Activated B cell treated with CpG ODN at 0.5 μM for 24 hours (primary cell): ENCODE measurements at regions of chr6 and their contacts with region 1.

Region 1: GRCh38 chr6:26196846-26197648 is 109.8 kb downstream of the HFE start:
- DNase-seq: peak; percentile 63
- ATAC-seq: peak; percentile 53
- H3K4me3 Mint-ChIP-seq: peak overlapping the region; percentile 93
- H3K27ac Mint-ChIP-seq: peak overlapping the region; percentile 96
- H3K4me1 Mint-ChIP-seq: peaks cover 52% of the 10 kb centered on the region
- H3K27me3 Mint-ChIP-seq: no peaks in the 10 kb centered on the region
- CTCF ChIP-seq: no peak

Region 2: DNA sequence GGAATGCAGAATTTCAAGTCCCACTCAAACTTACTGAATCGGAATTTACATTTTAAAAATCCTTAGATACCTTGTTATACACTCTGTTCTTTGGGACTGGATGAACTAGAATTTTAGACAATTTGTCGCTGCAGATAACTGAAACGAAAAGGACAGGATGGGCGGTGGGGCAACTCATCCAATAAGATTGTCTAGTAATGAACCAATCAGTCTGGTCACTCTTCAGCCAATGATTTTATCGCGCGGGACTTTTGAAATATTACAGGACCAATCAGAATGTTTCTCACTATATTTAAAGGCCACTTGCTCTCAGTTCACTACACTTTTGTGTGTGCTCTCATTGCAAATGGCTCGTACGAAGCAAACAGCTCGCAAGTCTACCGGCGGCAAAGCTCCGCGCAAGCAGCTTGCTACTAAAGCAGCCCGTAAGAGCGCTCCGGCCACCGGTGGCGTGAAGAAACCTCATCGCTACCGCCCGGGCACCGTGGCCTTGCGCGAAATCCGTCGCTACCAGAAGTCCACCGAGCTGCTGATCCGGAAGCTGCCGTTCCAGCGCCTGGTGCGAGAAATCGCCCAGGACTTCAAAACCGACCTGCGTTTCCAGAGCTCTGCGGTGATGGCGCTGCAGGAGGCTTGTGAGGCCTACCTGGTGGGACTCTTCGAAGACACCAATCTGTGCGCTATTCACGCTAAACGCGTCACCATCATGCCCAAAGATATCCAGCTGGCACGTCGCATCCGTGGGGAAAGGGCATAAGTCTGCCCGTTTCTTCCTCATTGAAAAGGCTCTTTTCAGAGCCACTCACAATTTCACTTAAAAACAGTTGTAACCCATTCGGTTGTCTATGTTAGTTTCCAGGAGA is 151.8 kb before region 1 on chr6:
- CTCF ChIA-PET with region 1: no interaction called
- POLR2A ChIA-PET with region 1: interaction called, 108 read pairs
- intact Hi-C with region 1: no loop called
- DNase-seq: peak; percentile 51
- ATAC-seq: peak; percentile 58
- H3K4me3 Mint-ChIP-seq: peak overlapping the region; percentile 91
- H3K27ac Mint-ChIP-seq: peak overlapping the region; percentile 99
- H3K4me1 Mint-ChIP-seq: peaks cover 24% of the 10 kb centered on the region
- H3K27me3 Mint-ChIP-seq: no peaks in the 10 kb centered on the region
- CTCF ChIP-seq: no peak

Region 3: DNA sequence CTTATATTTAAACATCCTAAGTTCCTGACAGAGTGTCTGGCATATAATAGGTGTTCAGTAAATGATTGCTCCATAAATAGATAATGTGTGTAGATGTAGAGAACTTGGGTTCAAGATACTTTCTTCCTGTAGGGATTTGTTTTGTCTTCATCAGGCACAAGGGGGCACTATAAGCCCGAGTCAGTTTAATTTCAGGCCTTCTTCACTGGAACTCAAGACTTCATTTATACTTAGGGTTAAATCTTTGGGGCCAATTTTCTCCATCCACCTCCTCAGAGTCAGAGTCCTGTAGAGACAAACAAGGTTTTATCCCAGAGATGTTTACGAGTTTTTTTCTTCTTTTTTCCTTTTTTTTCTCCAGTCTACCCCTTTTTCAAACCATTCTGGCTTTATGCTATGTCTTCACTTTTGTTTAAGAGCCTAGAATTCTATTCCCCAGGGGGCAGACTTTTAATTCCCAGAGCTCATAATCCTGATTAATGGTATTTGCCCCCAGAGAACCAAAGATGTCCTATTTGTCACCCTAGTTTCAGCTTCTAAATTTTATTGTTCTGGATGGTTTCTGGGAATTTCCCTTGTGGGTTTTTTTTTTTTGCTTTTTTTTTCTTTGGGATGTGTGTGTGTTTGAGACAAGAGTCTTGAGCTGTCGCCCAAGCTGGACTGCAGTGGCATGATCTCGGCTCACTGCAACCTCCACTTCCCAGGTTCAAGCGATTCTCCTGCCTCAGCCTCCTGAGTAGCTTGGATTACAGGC is 21.4 kb before region 1 on chr6:
- CTCF ChIA-PET with region 1: interaction called, 12 read pairs
- POLR2A ChIA-PET with region 1: interaction called, 132 read pairs
- intact Hi-C with region 1: loop called (anchors 1 kb)
- DNase-seq: no peak
- ATAC-seq: no peak
- H3K4me3 Mint-ChIP-seq: no peak overlapping the region
- H3K27ac Mint-ChIP-seq: peak overlapping the region; percentile 65
- H3K4me1 Mint-ChIP-seq: peaks cover 38% of the 10 kb centered on the region
- H3K27me3 Mint-ChIP-seq: no peaks in the 10 kb centered on the region
- CTCF ChIP-seq: no peak

Region 4: DNA sequence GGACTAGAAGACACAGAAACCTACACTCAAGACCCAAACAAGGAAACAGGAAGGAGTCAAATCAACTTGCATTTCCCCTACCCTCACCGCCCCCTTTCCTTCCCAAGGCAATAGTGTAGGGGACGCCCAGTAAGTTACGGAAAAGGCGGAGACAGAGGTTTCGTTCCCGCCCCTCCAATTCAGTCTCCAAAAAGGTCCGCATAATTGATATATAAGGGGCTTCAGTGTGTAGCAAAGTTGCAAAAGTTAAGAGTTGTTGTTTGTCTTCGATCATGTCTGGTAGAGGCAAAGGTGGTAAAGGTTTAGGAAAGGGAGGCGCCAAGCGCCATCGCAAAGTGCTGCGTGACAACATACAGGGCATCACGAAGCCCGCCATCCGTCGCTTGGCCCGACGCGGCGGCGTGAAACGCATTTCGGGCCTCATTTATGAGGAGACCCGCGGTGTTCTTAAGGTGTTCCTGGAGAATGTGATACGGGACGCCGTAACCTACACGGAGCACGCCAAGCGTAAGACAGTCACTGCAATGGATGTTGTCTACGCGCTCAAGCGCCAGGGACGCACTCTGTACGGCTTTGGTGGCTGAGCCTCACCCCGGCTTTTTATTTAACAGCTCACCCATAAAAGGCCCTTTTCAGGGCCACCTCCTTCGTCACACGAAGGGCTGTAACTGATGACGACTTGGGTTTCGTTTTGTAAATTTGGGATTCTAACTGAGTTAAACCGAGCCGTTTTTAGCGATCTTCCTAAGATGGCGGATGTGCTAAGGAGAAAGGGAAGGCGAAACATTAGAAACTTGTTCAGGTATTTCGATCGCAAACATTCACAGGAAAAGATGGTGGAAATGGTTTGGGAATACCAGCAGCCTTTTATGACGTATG is 43.3 kb after region 1 on chr6:
- CTCF ChIA-PET with region 1: interaction called, 3 read pairs
- POLR2A ChIA-PET with region 1: interaction called, 340 read pairs
- intact Hi-C with region 1: loop called (anchors 1 kb)
- DNase-seq: peak; percentile 61
- ATAC-seq: peak; percentile 79
- H3K4me3 Mint-ChIP-seq: peak overlapping the region; percentile 82
- H3K27ac Mint-ChIP-seq: peak overlapping the region; percentile 92
- H3K4me1 Mint-ChIP-seq: peaks cover 26% of the 10 kb centered on the region
- H3K27me3 Mint-ChIP-seq: no peaks in the 10 kb centered on the region
- CTCF ChIP-seq: no peak

Region 5: DNA sequence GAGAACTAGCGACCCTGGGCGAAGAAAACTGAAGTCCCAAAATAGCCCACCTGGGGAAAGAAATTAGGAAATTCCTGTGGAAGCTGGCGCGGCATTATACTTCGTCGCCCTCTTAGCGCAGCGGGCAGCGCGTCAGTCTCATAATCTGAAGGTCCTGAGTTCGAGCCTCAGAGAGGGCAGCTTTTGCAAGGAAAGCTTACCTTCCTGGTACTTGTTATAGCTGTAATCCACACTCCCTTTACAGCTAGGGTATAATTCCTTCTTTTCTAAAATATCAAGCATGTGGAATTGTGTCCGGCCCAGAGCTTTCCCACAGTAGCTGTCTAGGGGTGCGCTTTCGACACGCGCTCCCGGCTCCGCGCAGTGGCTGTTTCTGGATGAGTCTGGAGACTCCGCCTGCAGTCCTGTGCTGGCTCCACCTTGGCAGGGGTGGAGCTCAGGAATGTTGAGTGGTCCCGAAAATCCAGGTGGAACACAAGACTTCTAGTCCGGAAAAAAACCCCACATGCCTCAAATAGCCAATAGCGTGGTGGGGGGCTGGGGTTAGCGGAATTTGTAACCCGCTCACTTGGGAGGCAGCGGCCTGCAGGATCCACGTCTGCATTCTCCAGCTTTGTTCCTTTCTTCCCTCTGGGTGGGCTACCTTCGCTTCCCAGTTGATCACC is 546.2 kb after region 1 on chr6:
- CTCF ChIA-PET with region 1: no interaction called
- POLR2A ChIA-PET with region 1: no interaction called
- intact Hi-C with region 1: no loop called
- DNase-seq: no peak
- ATAC-seq: no peak
- H3K4me3 Mint-ChIP-seq: no peak overlapping the region
- H3K27ac Mint-ChIP-seq: no peak overlapping the region
- H3K4me1 Mint-ChIP-seq: no peaks in the 10 kb centered on the region
- H3K27me3 Mint-ChIP-seq: peaks cover 39% of the 10 kb centered on the region
- CTCF ChIP-seq: no peak

Region 6: DNA sequence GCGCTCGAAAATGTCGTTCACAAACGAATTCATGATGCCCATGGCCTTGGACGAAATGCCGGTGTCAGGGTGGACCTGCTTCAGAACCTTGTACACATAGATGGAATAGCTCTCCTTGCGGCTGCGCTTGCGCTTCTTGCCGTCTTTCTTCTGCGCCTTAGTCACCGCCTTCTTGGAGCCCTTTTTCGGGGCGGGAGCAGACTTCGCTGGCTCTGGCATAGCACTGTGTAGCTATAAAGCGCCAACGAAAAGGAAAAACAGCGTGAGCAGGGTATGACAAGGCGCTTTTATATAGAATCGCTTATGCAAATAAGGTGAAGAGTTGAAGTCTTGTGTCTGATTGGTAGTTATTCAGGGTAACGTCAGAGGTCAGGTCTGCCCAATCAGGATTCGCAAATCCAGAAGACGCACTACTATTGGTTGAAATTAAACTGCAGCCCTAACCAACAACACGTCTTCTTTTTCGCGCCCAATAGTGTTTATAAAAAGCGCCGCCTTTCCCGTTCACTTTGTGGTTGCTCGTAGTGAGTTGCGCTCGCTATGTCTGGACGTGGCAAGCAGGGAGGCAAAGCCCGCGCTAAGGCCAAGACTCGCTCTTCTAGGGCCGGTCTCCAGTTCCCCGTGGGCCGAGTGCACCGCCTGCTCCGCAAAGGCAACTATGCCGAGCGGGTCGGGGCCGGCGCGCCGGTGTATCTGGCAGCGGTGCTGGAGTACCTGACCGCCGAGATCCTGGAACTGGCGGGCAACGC is 935.7 kb after region 1 on chr6:
- CTCF ChIA-PET with region 1: no interaction called
- POLR2A ChIA-PET with region 1: interaction called, 37 read pairs
- intact Hi-C with region 1: loop called (anchors 2 kb)
- DNase-seq: peak; percentile 77
- ATAC-seq: peak; percentile 84
- H3K4me3 Mint-ChIP-seq: no peak overlapping the region
- H3K27ac Mint-ChIP-seq: no peak overlapping the region
- H3K4me1 Mint-ChIP-seq: peaks cover 14% of the 10 kb centered on the region
- H3K27me3 Mint-ChIP-seq: no peaks in the 10 kb centered on the region
- CTCF ChIP-seq: no peak

Region 7: DNA sequence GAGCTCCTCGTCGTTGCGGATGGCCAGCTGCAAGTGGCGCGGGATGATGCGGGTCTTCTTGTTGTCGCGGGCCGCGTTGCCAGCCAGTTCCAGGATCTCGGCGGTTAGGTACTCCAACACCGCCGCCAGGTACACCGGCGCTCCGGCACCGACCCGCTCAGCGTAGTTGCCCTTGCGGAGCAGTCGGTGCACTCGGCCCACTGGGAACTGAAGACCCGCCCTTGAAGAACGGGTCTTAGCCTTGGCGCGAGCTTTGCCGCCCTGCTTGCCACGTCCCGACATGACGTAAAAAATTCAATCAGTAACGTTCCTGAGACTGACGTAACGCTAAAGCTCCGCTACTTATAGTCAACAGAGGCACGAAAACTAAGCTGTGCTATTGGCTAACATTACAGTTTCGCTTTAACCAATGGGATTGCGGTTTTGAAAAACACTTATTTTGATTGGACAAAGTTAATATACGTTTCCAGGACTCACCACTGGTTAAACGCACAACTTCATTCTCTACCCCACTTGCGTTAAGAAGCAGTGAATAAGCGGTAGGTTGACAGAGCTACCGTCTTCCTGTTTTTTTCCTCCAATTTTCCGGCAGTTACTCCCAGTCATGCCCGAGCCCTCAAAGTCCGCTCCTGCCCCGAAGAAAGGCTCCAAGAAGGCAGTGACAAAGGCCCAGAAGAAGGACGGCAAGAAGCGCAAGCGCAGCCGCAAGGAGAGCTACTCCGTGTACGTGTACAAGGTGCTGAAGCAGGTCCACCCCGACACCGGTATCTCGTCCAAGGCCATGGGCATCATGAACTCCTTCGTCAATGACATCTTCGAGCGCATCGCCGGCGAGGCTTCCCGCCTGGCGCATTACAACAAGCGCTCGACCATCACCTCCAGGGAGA is 1641.3 kb after region 1 on chr6:
- CTCF ChIA-PET with region 1: no interaction called
- POLR2A ChIA-PET with region 1: interaction called, 68 read pairs
- intact Hi-C with region 1: loop called (anchors 2 kb)
- DNase-seq: peak; percentile 73
- ATAC-seq: peak; percentile 76
- H3K4me3 Mint-ChIP-seq: no peak overlapping the region
- H3K27ac Mint-ChIP-seq: no peak overlapping the region
- H3K4me1 Mint-ChIP-seq: peaks cover 18% of the 10 kb centered on the region
- H3K27me3 Mint-ChIP-seq: no peaks in the 10 kb centered on the region
- CTCF ChIP-seq: no peak

Region 8: GRCh38 chr6:28136585-28137504 is 1939.8 kb after region 1 on chr6:
- CTCF ChIA-PET with region 1: no interaction called
- POLR2A ChIA-PET with region 1: no interaction called
- intact Hi-C with region 1: loop called (anchors 10 kb)
- DNase-seq: peak; percentile 69
- ATAC-seq: peak; percentile 42
- H3K4me3 Mint-ChIP-seq: peak overlapping the region; percentile 98
- H3K27ac Mint-ChIP-seq: peak overlapping the region; percentile 100
- H3K4me1 Mint-ChIP-seq: peaks cover 76% of the 10 kb centered on the region
- H3K27me3 Mint-ChIP-seq: no peaks in the 10 kb centered on the region
- CTCF ChIP-seq: no peak